ENCODE measurements at regions of chr3 and their contacts with region 1.

Region 1: DNA sequence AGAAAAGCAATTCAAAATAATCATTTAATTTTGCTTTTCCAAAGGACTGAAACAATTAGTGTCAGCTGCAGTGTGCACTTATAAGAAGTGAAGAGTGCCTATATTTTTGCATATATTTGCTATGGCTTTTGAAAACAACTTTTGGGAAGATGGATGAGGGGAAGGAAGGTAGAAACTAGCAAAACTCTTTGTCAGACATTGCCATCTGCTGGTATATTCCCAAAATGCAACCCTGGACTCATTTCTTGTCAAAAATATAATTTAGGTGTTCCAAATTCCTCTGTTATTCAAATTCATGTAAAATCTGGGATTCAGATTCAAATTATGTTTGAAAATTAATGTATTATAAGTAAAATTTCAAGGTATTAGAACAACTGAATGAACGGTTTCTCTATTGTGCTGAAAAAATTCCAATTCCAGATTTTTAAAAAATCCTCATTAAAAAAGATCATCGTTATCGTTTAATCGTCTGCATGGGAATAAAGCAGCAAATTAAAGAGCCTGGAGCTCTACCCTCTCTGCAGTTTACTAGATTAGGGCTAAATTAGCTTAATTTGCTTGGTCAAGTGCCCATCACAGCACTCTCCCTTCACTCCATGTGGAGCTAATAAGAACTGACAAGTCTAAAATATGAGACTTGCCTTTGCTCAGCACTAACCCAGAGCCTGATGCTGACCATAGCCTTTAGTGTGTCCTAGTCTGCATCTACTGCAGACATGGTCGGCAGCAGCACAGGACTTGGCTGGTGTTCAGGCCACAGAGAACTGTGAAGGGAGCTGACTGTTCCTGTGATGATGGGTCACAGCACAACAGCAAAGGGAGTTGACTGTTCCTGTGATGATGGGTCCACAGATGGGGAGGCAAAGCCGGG is 67.9 kb upstream of the MITF start:
- DNase-seq: no peak
- ATAC-seq: peak; percentile 51; the same call in 1 of the 3 replicates
- H3K4me3 ChIP-seq: no peak overlapping the region
- H3K27ac ChIP-seq: no peak overlapping the region
- H3K4me1 ChIP-seq: no peaks in the 10 kb centered on the region
- H3K27me3 ChIP-seq: no peaks in the 10 kb centered on the region
- CTCF ChIP-seq: peak; percentile 50 to 63 (median 53); a peak in 5 of 6 replicates
- EP300 ChIP-seq: no peak
- POLR2A ChIP-seq: no peak
- RAD21 ChIP-seq: peak; percentile 69

Region 2: GRCh38 chr3:69425261-69425660 is 246.1 kb before region 1 on chr3:
- CTCF ChIA-PET with region 1: interaction called, 3 read pairs
- POLR2A ChIA-PET with region 1: no interaction called
- RAD21 ChIA-PET with region 1: interaction called, 3 read pairs
- SMC1A ChIA-PET with region 1: no interaction called
- in situ Hi-C with region 1: no loop called
- intact Hi-C with region 1: loop called (anchors 5 kb)
- DNase-seq: no peak
- ATAC-seq: peak; percentile 92
- H3K4me3 ChIP-seq: no peak overlapping the region
- H3K27ac ChIP-seq: no peak overlapping the region
- H3K4me1 ChIP-seq: no peaks in the 10 kb centered on the region
- H3K27me3 ChIP-seq: no peaks in the 10 kb centered on the region
- CTCF ChIP-seq: peak; percentile 67 to 72 (median 68)
- EP300 ChIP-seq: no peak
- POLR2A ChIP-seq: no peak
- RAD21 ChIP-seq: peak; percentile 78

Region 3: DNA sequence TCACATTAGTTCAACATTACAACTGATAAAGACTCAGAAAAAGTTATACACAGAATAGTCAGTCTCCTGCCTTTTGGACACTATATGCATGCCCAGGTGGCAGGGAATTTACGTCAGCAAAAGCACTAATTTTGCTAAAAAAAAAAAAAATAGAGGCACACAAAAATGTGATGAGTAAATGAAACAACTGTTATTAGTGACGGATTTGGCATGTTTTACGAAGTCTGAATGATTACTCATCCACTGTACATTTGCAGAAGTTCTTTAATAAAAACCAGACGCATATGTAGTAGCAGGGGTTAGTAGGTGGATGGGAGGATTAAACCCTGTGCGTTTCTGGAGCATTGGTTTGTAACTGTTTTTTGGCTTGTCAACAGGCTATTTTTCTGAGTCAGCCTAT is 166.9 kb after region 1 on chr3:
- CTCF ChIA-PET with region 1: no interaction called
- POLR2A ChIA-PET with region 1: no interaction called
- RAD21 ChIA-PET with region 1: no interaction called
- SMC1A ChIA-PET with region 1: no interaction called
- in situ Hi-C with region 1: no loop called
- intact Hi-C with region 1: no loop called
- DNase-seq: no peak
- ATAC-seq: no peak
- H3K4me3 ChIP-seq: no peak overlapping the region
- H3K27ac ChIP-seq: no peak overlapping the region
- H3K4me1 ChIP-seq: no peaks in the 10 kb centered on the region
- H3K27me3 ChIP-seq: no peaks in the 10 kb centered on the region
- CTCF ChIP-seq: no peak
- EP300 ChIP-seq: no peak
- POLR2A ChIP-seq: no peak
- RAD21 ChIP-seq: no peak

Measured in GM12878 (cell line).